ENCODE measurements at regions of chr1 and their contacts with region 1.

Region 1: GRCh38 chr1:27357281-27358037 is 9.3 kb downstream of the MAP3K6 start:
- DNase-seq: peak; percentile 90
- ATAC-seq: peak; percentile 82
- H3K4me3 Mint-ChIP-seq: peak overlapping the region; percentile 78
- H3K27ac Mint-ChIP-seq: peak overlapping the region; percentile 97
- H3K4me1 Mint-ChIP-seq: peaks cover 48% of the 10 kb centered on the region
- H3K27me3 Mint-ChIP-seq: peaks cover 9% of the 10 kb centered on the region

Region 2: GRCh38 chr1:27321813-27322577 is 35.5 kb before region 1 on chr1 and contains the start of gene TMEM222:
- CTCF ChIA-PET with region 1: interaction called, 30 read pairs
- POLR2A ChIA-PET with region 1: interaction called, 5 read pairs
- DNase-seq: peak; percentile 97
- ATAC-seq: peak; percentile 97
- H3K4me3 Mint-ChIP-seq: peak within 1 kb of the TSS; percentile 98
- H3K27ac Mint-ChIP-seq: peak within 1 kb of the TSS; percentile 97
- H3K4me1 Mint-ChIP-seq: peaks cover 37% of the 10 kb centered on the region
- H3K27me3 Mint-ChIP-seq: peaks cover 4% of the 10 kb centered on the region
- total RNA-seq, gene TMEM222: 35.2 to 38.5 TPM

Region 3: DNA sequence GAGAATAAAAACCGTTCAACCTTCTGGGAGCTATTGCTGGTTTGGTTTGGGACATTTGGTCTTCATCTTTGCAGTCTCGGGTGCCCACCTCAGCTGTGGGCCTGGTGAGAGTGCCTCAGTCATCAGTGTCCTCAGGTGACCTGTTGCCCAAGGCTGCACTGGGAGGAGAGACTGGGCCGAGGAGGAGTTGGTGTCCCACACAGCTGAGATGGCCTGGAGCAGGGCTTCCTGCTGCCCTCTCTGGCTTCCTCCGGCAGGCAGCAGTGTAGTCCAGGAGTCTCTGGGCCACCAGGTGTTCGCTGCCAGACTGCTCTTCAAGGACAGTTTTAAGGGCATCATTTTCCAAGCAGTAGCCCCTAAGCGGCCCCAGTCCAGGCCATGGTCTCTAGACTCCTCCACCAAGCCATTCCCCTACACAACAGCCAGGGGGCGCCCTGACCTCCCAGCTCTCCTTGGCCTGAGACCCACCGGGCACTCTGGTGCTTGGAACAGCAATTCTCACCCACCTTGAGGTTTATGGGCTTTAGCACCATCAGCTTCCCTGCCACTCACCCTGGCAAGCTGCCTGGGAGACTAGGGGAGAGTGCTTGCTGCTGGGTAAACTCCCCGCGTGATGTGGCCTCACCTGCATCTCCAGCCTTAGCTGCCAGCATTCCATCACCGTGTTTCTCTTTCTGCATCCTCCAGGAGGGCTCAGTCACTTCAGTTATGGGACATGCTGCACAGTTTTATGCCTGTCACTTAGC is 24.8 kb before region 1 on chr1:
- CTCF ChIA-PET with region 1: interaction called, 46 read pairs
- POLR2A ChIA-PET with region 1: interaction called, 4 read pairs
- DNase-seq: peak; percentile 72
- ATAC-seq: peak; percentile 88
- H3K4me3 Mint-ChIP-seq: no peak overlapping the region
- H3K27ac Mint-ChIP-seq: peak overlapping the region; percentile 60
- H3K4me1 Mint-ChIP-seq: peaks cover 25% of the 10 kb centered on the region
- H3K27me3 Mint-ChIP-seq: no peaks in the 10 kb centered on the region

Region 4: GRCh38 chr1:27341525-27342252 is 15.8 kb before region 1 on chr1 and contains the start of gene SYTL1:
- CTCF ChIA-PET with region 1: interaction called, 99 read pairs
- POLR2A ChIA-PET with region 1: interaction called, 56 read pairs
- DNase-seq: peak; percentile 80
- ATAC-seq: peak; percentile 77
- H3K4me3 Mint-ChIP-seq: peak within 1 kb of the TSS; percentile 91
- H3K27ac Mint-ChIP-seq: peak within 1 kb of the TSS; percentile 96
- H3K4me1 Mint-ChIP-seq: peaks cover 52% of the 10 kb centered on the region
- H3K27me3 Mint-ChIP-seq: no peaks in the 10 kb centered on the region
- total RNA-seq, gene SYTL1: 81.0 to 83.1 TPM

Region 5: GRCh38 chr1:27372808-27373690 is 15.6 kb after region 1 on chr1:
- CTCF ChIA-PET with region 1: interaction called, 22 read pairs
- POLR2A ChIA-PET with region 1: interaction called, 4 read pairs
- DNase-seq: no peak
- ATAC-seq: no peak
- H3K4me3 Mint-ChIP-seq: no peak overlapping the region
- H3K27ac Mint-ChIP-seq: no peak overlapping the region
- H3K4me1 Mint-ChIP-seq: peaks cover 18% of the 10 kb centered on the region
- H3K27me3 Mint-ChIP-seq: peaks cover 4% of the 10 kb centered on the region

Region 6: DNA sequence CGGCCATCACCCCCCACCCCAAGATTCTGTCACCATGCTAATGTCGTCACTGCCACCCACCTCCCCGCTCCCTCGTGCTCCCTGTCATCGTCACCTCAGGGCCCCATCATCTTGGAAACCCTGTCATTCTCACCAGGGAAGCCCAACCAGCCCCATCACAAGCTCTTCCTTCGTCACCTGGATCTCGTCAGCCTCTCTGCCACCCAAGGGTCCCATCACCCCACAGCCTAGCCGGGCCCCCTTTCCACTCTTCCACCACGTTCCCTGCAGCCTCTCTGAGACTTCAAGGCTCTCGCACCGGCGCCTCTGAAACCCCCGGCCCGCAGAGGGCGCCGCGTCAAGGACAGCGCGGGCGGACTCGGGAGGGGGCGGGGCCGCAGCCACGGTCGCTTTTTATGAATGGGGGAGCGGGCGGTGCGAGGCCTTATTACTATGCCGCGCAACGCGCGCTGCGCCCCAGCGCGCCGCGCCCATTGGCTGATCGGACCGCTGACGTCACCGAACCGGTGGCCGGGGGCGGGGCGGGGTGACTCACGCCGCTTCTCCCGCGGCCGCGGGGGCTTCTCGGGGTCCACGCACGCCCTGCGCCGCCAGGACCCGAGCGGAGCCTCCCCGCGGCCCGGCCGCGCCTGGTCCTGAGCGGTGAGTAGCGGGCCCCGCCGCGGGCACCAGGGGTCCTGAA is 34.8 kb after region 1 on chr1 and contains the start of gene GPR3:
- CTCF ChIA-PET with region 1: interaction called, 60 read pairs
- POLR2A ChIA-PET with region 1: interaction called, 6 read pairs
- DNase-seq: peak; percentile 95
- ATAC-seq: peak; percentile 94
- H3K4me3 Mint-ChIP-seq: peak within 1 kb of the TSS; percentile 74
- H3K27ac Mint-ChIP-seq: peak within 1 kb of the TSS; percentile 82
- H3K4me1 Mint-ChIP-seq: peaks cover 25% of the 10 kb centered on the region
- H3K27me3 Mint-ChIP-seq: peaks cover 12% of the 10 kb centered on the region
- total RNA-seq, gene GPR3: 0.47 to 0.66 TPM

Region 7: DNA sequence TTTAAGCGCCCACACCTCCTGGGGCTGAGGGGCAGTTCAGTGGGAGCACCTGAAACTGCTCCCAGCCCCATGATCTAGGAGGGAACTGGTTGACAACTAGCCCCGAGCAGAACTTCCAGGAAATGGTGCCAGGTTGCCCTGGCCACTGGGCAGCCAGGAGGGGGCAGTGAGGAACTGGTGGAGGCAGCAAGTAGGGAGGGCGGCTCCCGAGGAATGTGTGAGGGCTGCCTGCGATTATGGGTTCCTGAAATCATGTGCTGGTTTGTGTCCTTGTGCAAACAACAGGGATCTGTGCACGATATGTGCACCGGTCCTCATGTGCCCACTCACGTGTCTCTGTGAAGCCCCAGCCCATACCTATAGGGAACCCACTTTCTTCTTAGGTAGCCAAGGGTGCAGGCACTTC is 44.9 kb after region 1 on chr1:
- CTCF ChIA-PET with region 1: interaction called, 10 read pairs
- POLR2A ChIA-PET with region 1: no interaction called
- DNase-seq: no peak
- ATAC-seq: no peak
- H3K4me3 Mint-ChIP-seq: no peak overlapping the region
- H3K27ac Mint-ChIP-seq: no peak overlapping the region
- H3K4me1 Mint-ChIP-seq: peaks cover 23% of the 10 kb centered on the region
- H3K27me3 Mint-ChIP-seq: no peaks in the 10 kb centered on the region

Region 8: GRCh38 chr1:27417713-27418112 is 60.3 kb after region 1 on chr1:
- CTCF ChIA-PET with region 1: no interaction called
- POLR2A ChIA-PET with region 1: no interaction called
- DNase-seq: no peak
- ATAC-seq: no peak
- H3K4me3 Mint-ChIP-seq: no peak overlapping the region
- H3K27ac Mint-ChIP-seq: no peak overlapping the region
- H3K4me1 Mint-ChIP-seq: peaks cover 35% of the 10 kb centered on the region
- H3K27me3 Mint-ChIP-seq: no peaks in the 10 kb centered on the region

Region 9: GRCh38 chr1:27568300-27569087 is 211.0 kb after region 1 on chr1:
- CTCF ChIA-PET with region 1: no interaction called
- POLR2A ChIA-PET with region 1: no interaction called
- DNase-seq: peak; percentile 94
- ATAC-seq: peak; percentile 98
- H3K4me3 Mint-ChIP-seq: peak overlapping the region; percentile 64
- H3K27ac Mint-ChIP-seq: peak overlapping the region; percentile 46
- H3K4me1 Mint-ChIP-seq: peaks cover 29% of the 10 kb centered on the region
- H3K27me3 Mint-ChIP-seq: no peaks in the 10 kb centered on the region